CD8-positive, alpha-beta T cell (primary cell): ENCODE measurements at regions of chr11 and their contacts with region 1.

Region 1: DNA sequence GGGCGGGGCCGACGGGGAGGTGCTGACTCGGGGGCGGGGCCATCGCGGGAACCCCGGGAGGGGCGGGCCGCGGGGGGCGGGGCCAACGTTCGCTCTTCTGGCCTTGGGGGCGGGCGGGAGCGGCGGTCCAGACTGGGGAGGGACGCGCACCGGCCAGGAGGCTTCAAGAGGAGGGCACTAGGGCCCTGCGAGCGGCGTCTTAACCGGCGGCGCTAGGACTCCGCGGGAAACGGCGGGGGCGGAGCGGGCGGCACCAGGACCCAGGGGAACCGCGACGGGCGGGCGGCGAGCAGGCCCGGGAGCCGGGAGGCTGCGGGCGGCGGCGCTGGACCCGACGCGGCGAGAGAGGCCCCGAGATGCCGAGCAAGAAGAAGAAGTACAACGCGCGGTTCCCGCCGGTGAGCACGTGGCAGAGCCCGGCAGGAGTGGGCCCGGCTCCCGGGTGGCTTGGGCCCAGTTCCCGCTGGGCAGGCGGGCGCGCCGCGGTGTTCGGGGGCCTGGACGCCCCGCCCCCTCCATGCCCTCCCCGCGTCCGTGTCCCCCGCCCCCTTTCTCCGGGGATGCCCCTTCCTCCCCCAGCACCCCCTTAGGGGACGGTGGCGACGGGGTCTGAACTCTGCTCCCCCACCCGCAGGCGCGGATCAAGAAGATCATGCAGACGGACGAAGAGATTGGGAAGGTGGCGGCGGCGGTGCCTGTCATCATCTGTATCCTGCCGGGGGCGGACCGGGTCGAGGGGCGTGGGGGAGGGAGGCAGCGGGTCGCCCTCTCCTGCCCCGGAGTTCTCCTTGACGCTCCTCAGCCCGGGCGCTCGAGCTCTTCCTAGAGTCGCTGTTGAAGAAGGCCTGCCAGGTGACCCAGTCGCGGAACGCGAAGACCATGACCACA is at the start of gene DRAP1:
- DNase-seq: peak; percentile 98 to 100 (median 99)
- ATAC-seq: peak; percentile 89
- H3K4me3 ChIP-seq: peak within 1 kb of the TSS; percentile 94
- H3K4me3 Mint-ChIP-seq: peak within 1 kb of the TSS; percentile 91
- H3K27ac ChIP-seq: peak within 1 kb of the TSS; percentile 79 to 81
- H3K27ac Mint-ChIP-seq: peak within 1 kb of the TSS; percentile 93
- H3K4me1 ChIP-seq: peaks cover 41% of the 10 kb centered on the region
- H3K4me1 Mint-ChIP-seq: peaks cover 51% of the 10 kb centered on the region
- H3K27me3 ChIP-seq: no peaks in the 10 kb centered on the region
- H3K27me3 Mint-ChIP-seq: no peaks in the 10 kb centered on the region
- CTCF ChIP-seq: no peak
- total RNA-seq, gene DRAP1: 62.2 to 63.1 TPM

Region 2: GRCh38 chr11:65662799-65663638 is 256.4 kb before region 1 on chr11 and contains the start of gene RELA:
- CTCF ChIA-PET with region 1: no interaction called
- POLR2A ChIA-PET with region 1: no interaction called
- intact Hi-C with region 1: loop called in 1 of 2 experiments (anchors 2 kb)
- DNase-seq: peak; percentile 79 to 95 (median 89)
- ATAC-seq: peak; percentile 83
- H3K4me3 ChIP-seq: peak within 1 kb of the TSS; percentile 77 to 88
- H3K4me3 Mint-ChIP-seq: peak within 1 kb of the TSS; percentile 86
- H3K27ac ChIP-seq: peak within 1 kb of the TSS; percentile 92 to 98
- H3K27ac Mint-ChIP-seq: peak within 1 kb of the TSS; percentile 92
- H3K4me1 ChIP-seq: peaks cover 27% of the 10 kb centered on the region
- H3K4me1 Mint-ChIP-seq: peaks cover 38% of the 10 kb centered on the region
- H3K27me3 ChIP-seq: no peaks in the 10 kb centered on the region
- H3K27me3 Mint-ChIP-seq: no peaks in the 10 kb centered on the region
- CTCF ChIP-seq: no peak
- total RNA-seq, gene RELA: 380 to 384 TPM

Region 3: GRCh38 chr11:65720237-65720934 is 199.0 kb before region 1 on chr11 and contains the start of gene RNASEH2C:
- CTCF ChIA-PET with region 1: no interaction called
- POLR2A ChIA-PET with region 1: no interaction called
- intact Hi-C with region 1: loop called in 1 of 2 experiments (anchors 1 kb)
- DNase-seq: peak; percentile 53 to 89 (median 73)
- ATAC-seq: peak; percentile 93
- H3K4me3 ChIP-seq: peak within 1 kb of the TSS; percentile 84 to 92
- H3K4me3 Mint-ChIP-seq: peak within 1 kb of the TSS; percentile 90
- H3K27ac ChIP-seq: peak within 1 kb of the TSS; percentile 70 to 73
- H3K27ac Mint-ChIP-seq: peak within 1 kb of the TSS; percentile 88
- H3K4me1 ChIP-seq: peaks cover 22% of the 10 kb centered on the region
- H3K4me1 Mint-ChIP-seq: peaks cover 33% of the 10 kb centered on the region
- H3K27me3 ChIP-seq: no peaks in the 10 kb centered on the region
- H3K27me3 Mint-ChIP-seq: no peaks in the 10 kb centered on the region
- CTCF ChIP-seq: no peak
- total RNA-seq, gene RNASEH2C: 27.7 to 32.0 TPM

Region 4: GRCh38 chr11:65900125-65900898 is 19.1 kb before region 1 on chr11 and contains the start of gene FOSL1:
- CTCF ChIA-PET with region 1: interaction called, 5 read pairs
- POLR2A ChIA-PET with region 1: interaction called, 9 read pairs
- intact Hi-C with region 1: loop called (anchors 1 kb)
- DNase-seq: peak; percentile 82 to 97 (median 91)
- ATAC-seq: peak; percentile 93
- H3K4me3 ChIP-seq: peak within 1 kb of the TSS; percentile 36 to 49
- H3K4me3 Mint-ChIP-seq: peak within 1 kb of the TSS; percentile 73
- H3K27ac ChIP-seq: peak within 1 kb of the TSS; percentile 0 to 32
- H3K27ac Mint-ChIP-seq: peak within 1 kb of the TSS; percentile 69
- H3K4me1 ChIP-seq: peaks cover 20% of the 10 kb centered on the region
- H3K4me1 Mint-ChIP-seq: peaks cover 8% of the 10 kb centered on the region
- H3K27me3 ChIP-seq: peaks cover 0 to 4% of the 10 kb centered on the region in 2 experiments
- H3K27me3 Mint-ChIP-seq: no peaks in the 10 kb centered on the region
- CTCF ChIP-seq: no peak
- total RNA-seq, gene FOSL1: 2.0 to 4.0 TPM

Region 5: GRCh38 chr11:65961232-65961901 is 42.0 kb after region 1 on chr11 and contains the start of gene SART1:
- CTCF ChIA-PET with region 1: interaction called, 3 read pairs
- POLR2A ChIA-PET with region 1: interaction called, 10 read pairs
- intact Hi-C with region 1: loop called (anchors 1 kb)
- DNase-seq: peak; percentile 92 to 99 (median 96)
- ATAC-seq: peak; percentile 88
- H3K4me3 ChIP-seq: peak within 1 kb of the TSS; percentile 62 to 65
- H3K4me3 Mint-ChIP-seq: peak within 1 kb of the TSS; percentile 98
- H3K27ac ChIP-seq: peak within 1 kb of the TSS; percentile 83 to 85
- H3K27ac Mint-ChIP-seq: peak within 1 kb of the TSS; percentile 99
- H3K4me1 ChIP-seq: peaks cover 38% of the 10 kb centered on the region
- H3K4me1 Mint-ChIP-seq: peaks cover 53% of the 10 kb centered on the region
- H3K27me3 ChIP-seq: no peaks in the 10 kb centered on the region
- H3K27me3 Mint-ChIP-seq: no peaks in the 10 kb centered on the region
- CTCF ChIP-seq: no peak
- total RNA-seq, gene SART1: 102 to 123 TPM

Region 6: GRCh38 chr11:66001942-66002647 is 82.7 kb after region 1 on chr11 and contains the starts of genes BANF1 and EIF1AD:
- CTCF ChIA-PET with region 1: no interaction called
- POLR2A ChIA-PET with region 1: interaction called, 4 read pairs
- intact Hi-C with region 1: loop called (anchors 1 kb)
- DNase-seq: peak; percentile 85 to 98 (median 92)
- ATAC-seq: peak; percentile 83
- H3K4me3 ChIP-seq: peak within 1 kb of the TSS; percentile 80 to 98
- H3K4me3 Mint-ChIP-seq: peak within 1 kb of the TSS; percentile 99
- H3K27ac ChIP-seq: peak within 1 kb of the TSS; percentile 93 to 95
- H3K27ac Mint-ChIP-seq: peak within 1 kb of the TSS; percentile 98
- H3K4me1 ChIP-seq: peaks cover 21% of the 10 kb centered on the region
- H3K4me1 Mint-ChIP-seq: peaks cover 43% of the 10 kb centered on the region
- H3K27me3 ChIP-seq: no peaks in the 10 kb centered on the region
- H3K27me3 Mint-ChIP-seq: no peaks in the 10 kb centered on the region
- CTCF ChIP-seq: no peak
- total RNA-seq, gene BANF1: 31.6 to 34.0 TPM
- total RNA-seq, gene EIF1AD: 119 to 126 TPM